GM18951 (cell line): ENCODE measurements at regions of chr1 and their contacts with region 1.

Region 1: GRCh38 chr1:6414443-6414844 is 5.3 kb downstream of the HES2 start:
- POLR2A ChIP-seq: no peak

Region 2: GRCh38 chr1:6317098-6317760 is 97.2 kb before region 1 on chr1:
- in situ Hi-C with region 1: no loop called
- POLR2A ChIP-seq: no peak

Region 3: GRCh38 chr1:6347641-6348487 is 66.6 kb before region 1 on chr1:
- in situ Hi-C with region 1: loop called (anchors 5 kb)
- POLR2A ChIP-seq: no peak